Activated CD4-positive, alpha-beta T cell treated with anti-CD3 and anti-CD28 coated beads, Interleukin-2, amount 10 ng/mL, durations not matched to agents 24 days and 14 days (primary cell): ENCODE measurements at regions of chr11 and their contacts with region 1.

Region 1: GRCh38 chr11:3854977-3855807 is at the start of gene STIM1:
- DNase-seq: peak; percentile 100
- H3K4me3 Mint-ChIP-seq: peak within 1 kb of the TSS; percentile 98
- H3K27ac Mint-ChIP-seq: peak within 1 kb of the TSS; percentile 99
- H3K4me1 Mint-ChIP-seq: peaks cover 56% of the 10 kb centered on the region
- H3K27me3 Mint-ChIP-seq: no peaks in the 10 kb centered on the region
- total RNA-seq, gene STIM1: 60.6 and 63.4 TPM in 2 replicates

Region 2: GRCh38 chr11:3841426-3842350 is 13.5 kb before region 1 on chr11:
- intact Hi-C with region 1: loop called (anchors 1 kb)
- DNase-seq: peak; percentile 97
- H3K4me3 Mint-ChIP-seq: peak overlapping the region; percentile 93
- H3K27ac Mint-ChIP-seq: peak overlapping the region; percentile 97
- H3K4me1 Mint-ChIP-seq: peaks cover 55% of the 10 kb centered on the region
- H3K27me3 Mint-ChIP-seq: no peaks in the 10 kb centered on the region

Region 3: DNA sequence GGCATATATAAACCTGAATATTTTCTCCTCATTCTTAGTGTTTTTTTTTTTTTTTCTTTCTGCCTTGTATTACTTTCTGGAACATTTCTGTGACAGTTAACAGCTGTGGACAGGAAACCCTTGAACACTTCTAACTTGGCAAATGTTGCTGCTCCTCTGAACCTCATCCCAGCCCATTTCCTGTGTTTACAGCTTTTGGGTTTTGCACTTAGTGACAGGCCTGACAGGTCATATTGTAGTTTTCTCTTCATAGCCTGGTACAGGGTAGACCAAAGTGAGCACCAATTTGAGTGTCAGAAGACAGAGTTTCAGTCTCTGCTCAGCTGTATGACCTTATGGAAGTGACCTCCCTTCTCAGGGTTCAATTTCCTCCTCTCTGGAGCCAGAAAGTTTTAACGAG is 91.9 kb after region 1 on chr11:
- intact Hi-C with region 1: loop called (anchors 2 kb)
- DNase-seq: peak; percentile 92
- H3K4me3 Mint-ChIP-seq: peak overlapping the region; percentile 69
- H3K27ac Mint-ChIP-seq: peak overlapping the region; percentile 85
- H3K4me1 Mint-ChIP-seq: peaks cover 87% of the 10 kb centered on the region
- H3K27me3 Mint-ChIP-seq: no peaks in the 10 kb centered on the region

Region 4: DNA sequence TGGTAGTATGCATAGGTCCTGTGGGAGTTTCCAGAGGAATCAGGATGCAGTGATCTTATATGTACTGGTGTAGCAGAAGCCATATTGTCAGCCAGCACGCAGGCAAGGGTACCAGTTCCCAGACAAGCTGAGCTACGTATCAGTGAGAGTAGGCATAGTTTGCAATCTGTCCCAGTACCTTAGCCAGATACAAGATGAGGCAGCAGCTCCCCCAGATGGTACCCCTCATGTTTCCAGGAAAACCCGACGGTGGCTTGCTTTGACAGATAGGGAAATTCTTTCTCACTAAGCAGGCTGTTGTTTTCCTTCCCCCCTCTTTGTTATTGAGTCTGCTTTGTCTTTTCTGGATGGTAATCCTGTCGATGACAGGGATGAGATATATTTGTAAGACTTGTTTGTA is 129.7 kb after region 1 on chr11:
- intact Hi-C with region 1: loop called (anchors 1 kb)
- DNase-seq: peak; percentile 79
- H3K4me3 Mint-ChIP-seq: no peak overlapping the region
- H3K27ac Mint-ChIP-seq: peak overlapping the region; percentile 61
- H3K4me1 Mint-ChIP-seq: peaks cover 61% of the 10 kb centered on the region
- H3K27me3 Mint-ChIP-seq: no peaks in the 10 kb centered on the region

Region 5: DNA sequence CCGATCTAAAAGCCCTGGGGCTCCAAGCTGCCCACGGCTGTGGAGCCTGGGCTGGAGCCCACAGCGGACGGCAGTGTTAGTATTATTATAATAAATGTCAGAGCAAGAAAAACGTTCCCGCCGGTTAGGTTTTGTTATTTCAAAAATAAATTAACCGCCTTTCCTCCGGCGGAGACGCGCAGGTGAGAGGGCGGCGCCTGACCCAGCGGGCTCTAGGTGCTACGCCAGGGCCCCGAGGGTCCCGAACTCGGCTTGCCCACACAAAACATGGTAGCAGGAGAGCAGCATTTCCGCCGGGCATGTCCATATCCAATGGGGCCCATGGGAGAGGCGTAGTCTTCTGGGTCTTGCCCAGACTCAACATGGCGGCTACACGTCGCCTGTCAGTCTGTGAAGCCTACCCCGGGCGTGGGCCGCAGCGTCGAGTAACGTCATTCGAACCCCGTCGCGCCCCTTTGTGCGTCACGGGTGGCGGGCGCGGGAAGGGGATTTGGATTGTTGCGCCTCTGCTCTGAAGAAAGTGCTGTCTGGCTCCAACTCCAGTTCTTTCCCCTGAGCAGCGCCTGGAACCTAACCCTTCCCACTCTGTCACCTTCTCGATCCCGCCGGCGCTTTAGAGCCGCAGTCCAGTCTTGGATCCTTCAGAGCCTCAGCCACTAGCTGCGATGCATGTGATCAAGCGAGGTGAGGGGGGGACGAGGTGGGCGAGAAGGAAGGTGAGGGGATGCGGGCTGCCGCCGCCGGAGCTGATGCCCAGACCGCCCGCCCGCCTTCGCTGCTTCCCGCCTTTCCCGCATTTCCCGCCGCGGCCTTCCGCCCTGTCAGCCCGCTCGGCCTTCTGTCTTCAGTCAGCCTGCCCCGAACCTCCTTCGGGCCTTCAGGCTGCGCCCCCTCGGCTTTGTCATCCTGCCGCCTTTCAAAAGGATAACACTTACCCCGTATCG is 239.4 kb after region 1 on chr11 and contains the start of gene RRM1:
- intact Hi-C with region 1: loop called (anchors 1 kb)
- DNase-seq: peak; percentile 98
- H3K4me3 Mint-ChIP-seq: peak within 1 kb of the TSS; percentile 98
- H3K27ac Mint-ChIP-seq: peak within 1 kb of the TSS; percentile 97
- H3K4me1 Mint-ChIP-seq: peaks cover 78% of the 10 kb centered on the region
- H3K27me3 Mint-ChIP-seq: no peaks in the 10 kb centered on the region
- total RNA-seq, gene RRM1: 166 and 184 TPM in 2 replicates

Region 6: GRCh38 chr11:4891996-4892640 is 1036.9 kb after region 1 on chr11:
- intact Hi-C with region 1: no loop called
- DNase-seq: no peak
- H3K4me3 Mint-ChIP-seq: no peak overlapping the region
- H3K27ac Mint-ChIP-seq: no peak overlapping the region
- H3K4me1 Mint-ChIP-seq: no peaks in the 10 kb centered on the region
- H3K27me3 Mint-ChIP-seq: no peaks in the 10 kb centered on the region